Endothelial cell of umbilical vein (primary cell): ENCODE measurements at regions of chr5 and their contacts with region 1.

Region 1: GRCh38 chr5:90529194-90529938 is at the start of gene LYSMD3:
- DNase-seq: peak; percentile 98
- H3K4me3 ChIP-seq: peak within 1 kb of the TSS; percentile 69 to 94 (median 88)
- H3K27ac ChIP-seq: peak within 1 kb of the TSS; percentile 88
- H3K4me1 ChIP-seq: peaks cover 16% of the 10 kb centered on the region
- H3K27me3 ChIP-seq: peaks cover 8 to 29% of the 10 kb centered on the region in 2 experiments
- CTCF ChIP-seq: no peak
- POLR2A ChIP-seq: peak; percentile 88
- total RNA-seq, gene LYSMD3: 21.3 and 22.7 TPM in 2 replicates

Region 2: DNA sequence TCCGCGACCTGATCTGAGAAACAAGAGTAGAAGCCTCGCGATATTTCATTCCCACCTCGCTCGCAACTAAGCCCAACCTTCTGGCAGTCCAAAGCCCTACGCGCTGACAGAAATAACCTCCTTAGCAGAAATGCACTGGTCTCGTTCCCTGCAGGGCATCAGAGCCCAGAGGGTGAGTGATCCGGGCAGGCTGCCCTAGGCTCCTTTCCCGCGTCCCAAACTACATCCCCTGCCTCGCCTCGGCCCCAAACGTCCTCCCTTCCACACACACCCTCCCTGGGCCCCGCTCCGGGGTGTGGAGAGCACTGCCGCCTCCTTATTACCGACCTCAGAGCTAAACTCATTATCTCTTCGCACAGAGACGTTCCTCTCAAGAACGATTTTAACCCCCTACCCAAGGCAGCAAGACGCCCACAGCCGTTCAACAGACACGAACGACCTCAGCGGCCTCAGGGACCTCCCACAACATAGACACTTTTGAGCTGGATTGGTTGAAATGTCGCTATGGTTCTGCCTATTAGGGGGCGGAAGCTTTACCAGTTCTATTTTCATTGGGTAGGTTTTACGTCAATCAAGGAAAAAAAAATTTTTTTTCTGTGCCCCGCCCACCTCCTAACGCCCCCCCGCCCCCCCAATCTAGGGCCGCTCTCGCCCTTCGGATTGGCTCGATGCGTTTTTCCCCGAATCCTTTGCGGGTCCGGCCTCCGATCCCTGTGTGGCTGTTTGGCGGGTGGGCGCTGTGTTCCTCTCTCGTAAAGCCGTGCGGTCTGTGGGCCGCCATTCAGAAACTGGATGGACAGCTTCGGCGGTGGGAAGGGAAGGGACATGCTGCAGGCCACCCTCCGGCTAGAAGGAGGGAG is 119.8 kb before region 1 on chr5 and contains the start of gene CETN3:
- CTCF ChIA-PET with region 1: interaction called, 3 read pairs
- POLR2A ChIA-PET with region 1: no interaction called
- dilution Hi-C with region 1: no loop called
- intact Hi-C with region 1: loop called (anchors 1 kb)
- DNase-seq: peak; percentile 96
- H3K4me3 ChIP-seq: peak within 1 kb of the TSS; percentile 82 to 95 (median 83)
- H3K27ac ChIP-seq: peak within 1 kb of the TSS; percentile 94
- H3K4me1 ChIP-seq: peaks cover 15% of the 10 kb centered on the region
- H3K27me3 ChIP-seq: no peaks in the 10 kb centered on the region
- CTCF ChIP-seq: no peak
- POLR2A ChIP-seq: peak; percentile 94
- total RNA-seq, gene CETN3: 15.5 and 17.3 TPM in 2 replicates

Region 3: GRCh38 chr5:90474235-90475109 is 54.9 kb before region 1 on chr5 and contains the starts of genes MBLAC2 and POLR3G:
- CTCF ChIA-PET with region 1: interaction called, 38 read pairs
- POLR2A ChIA-PET with region 1: interaction called, 3 read pairs
- dilution Hi-C with region 1: no loop called
- intact Hi-C with region 1: loop called (anchors 1 kb)
- DNase-seq: peak; percentile 94
- H3K4me3 ChIP-seq: peak within 1 kb of the TSS; percentile 48 to 88 (median 64)
- H3K27ac ChIP-seq: no peak within 1 kb of the TSS
- H3K4me1 ChIP-seq: peaks cover 15% of the 10 kb centered on the region
- H3K27me3 ChIP-seq: no peaks in the 10 kb centered on the region
- CTCF ChIP-seq: peak; percentile 25 to 66
- POLR2A ChIP-seq: peak; percentile 82
- total RNA-seq, gene MBLAC2: 4.8 and 5.3 TPM in 2 replicates
- total RNA-seq, gene POLR3G: 15.0 and 16.7 TPM in 2 replicates

Region 4: DNA sequence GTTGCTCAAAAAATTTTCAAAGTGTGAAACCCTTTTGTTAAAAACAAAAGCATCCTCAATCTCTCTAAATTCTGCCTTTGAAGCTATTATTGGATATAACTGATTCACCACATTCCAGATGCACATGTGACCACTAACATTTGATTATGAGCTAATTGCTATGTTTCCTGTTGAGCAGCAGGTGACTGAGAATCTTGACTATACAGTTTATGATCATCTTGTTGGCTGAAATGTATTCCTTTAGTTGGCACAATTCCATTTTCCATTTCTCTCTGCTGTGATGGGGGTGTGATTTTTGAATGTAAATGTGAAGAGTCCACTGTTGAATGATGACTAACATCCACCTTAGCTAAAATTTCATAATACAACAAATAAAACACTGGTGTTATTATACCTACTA is 10.7 kb before region 1 on chr5:
- CTCF ChIA-PET with region 1: interaction called, 8 read pairs
- POLR2A ChIA-PET with region 1: no interaction called
- dilution Hi-C with region 1: no loop called
- intact Hi-C with region 1: loop called (anchors 1 kb)
- DNase-seq: peak; percentile 39
- H3K4me3 ChIP-seq: no peak overlapping the region
- H3K27ac ChIP-seq: peak overlapping the region; percentile 41
- H3K4me1 ChIP-seq: peaks cover 5% of the 10 kb centered on the region
- H3K27me3 ChIP-seq: no peaks in the 10 kb centered on the region
- CTCF ChIP-seq: no peak
- POLR2A ChIP-seq: no peak

Region 5: DNA sequence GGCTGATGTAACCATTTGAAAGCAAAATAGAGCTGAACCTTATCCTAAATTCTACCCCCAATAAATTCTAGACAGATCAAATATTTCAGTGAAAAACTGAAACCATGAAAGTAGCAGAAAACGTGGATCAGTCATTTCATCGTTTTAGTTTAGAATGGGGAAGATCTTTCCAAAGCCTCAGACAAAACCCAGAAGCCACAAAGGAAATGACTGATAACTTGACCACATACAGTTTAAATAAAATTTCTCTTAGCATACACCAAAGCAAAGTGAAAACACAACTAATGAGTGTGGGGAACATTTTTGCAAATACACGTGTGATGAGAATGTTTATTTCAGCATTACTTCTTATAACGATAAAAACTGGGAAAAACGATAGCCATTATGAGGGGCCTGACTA is 314.1 kb after region 1 on chr5:
- CTCF ChIA-PET with region 1: no interaction called
- POLR2A ChIA-PET with region 1: no interaction called
- dilution Hi-C with region 1: no loop called
- intact Hi-C with region 1: no loop called
- DNase-seq: no peak
- H3K4me3 ChIP-seq: no peak overlapping the region
- H3K27ac ChIP-seq: no peak overlapping the region
- H3K4me1 ChIP-seq: no peaks in the 10 kb centered on the region
- H3K27me3 ChIP-seq: peaks cover 0 to 2% of the 10 kb centered on the region in 2 experiments
- CTCF ChIP-seq: no peak
- POLR2A ChIP-seq: no peak